Motor neuron (in vitro differentiated cells): ENCODE measurements at regions of chr18 and their contacts with region 1.

Region 1: GRCh38 chr18:8003878-8004675 is 437.0 kb downstream of the PTPRM start:
- ATAC-seq: peak in 3 of 8 experiments; percentile 34 to 62 (median 62)
- H3K4me3 ChIP-seq: no peak overlapping the region
- H3K27ac ChIP-seq: no peak overlapping the region
- H3K4me1 ChIP-seq: peaks cover 62 to 88% of the 10 kb centered on the region in 2 donors

Region 2: DNA sequence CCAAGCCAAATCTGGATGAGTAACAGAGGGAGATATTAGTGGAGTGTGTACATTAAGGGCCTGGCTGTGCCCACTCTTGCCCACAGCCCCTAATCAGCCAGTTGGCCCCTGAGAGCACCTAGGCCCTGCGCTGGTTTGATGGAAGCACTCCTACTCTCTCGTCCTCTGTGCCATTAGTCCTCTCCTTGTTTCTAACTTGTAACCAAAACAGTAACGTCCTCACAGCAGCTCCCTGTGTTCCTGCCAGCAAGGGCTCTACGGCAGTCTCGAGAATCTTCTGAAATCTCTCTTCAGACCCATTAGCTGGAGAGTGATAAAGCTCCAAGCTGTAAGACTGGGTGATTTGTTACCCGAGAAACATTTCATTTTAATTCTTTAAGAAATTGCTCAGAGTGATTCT is 697.0 kb before region 1 on chr18:
- in situ Hi-C with region 1: no loop called
- ATAC-seq: peak in 1 of 8 experiments; percentile 33
- H3K4me3 ChIP-seq: no peak overlapping the region
- H3K27ac ChIP-seq: no peak overlapping the region
- H3K4me1 ChIP-seq: peaks cover 0 to 2% of the 10 kb centered on the region in 2 donors

Region 3: GRCh38 chr18:7760967-7761948 is 242.8 kb before region 1 on chr18:
- in situ Hi-C with region 1: no loop called
- ATAC-seq: peak in 1 of 8 experiments; percentile 90
- H3K4me3 ChIP-seq: no peak overlapping the region
- H3K27ac ChIP-seq: no peak overlapping the region
- H3K4me1 ChIP-seq: peaks cover 3 to 7% of the 10 kb centered on the region in 2 donors

Region 4: DNA sequence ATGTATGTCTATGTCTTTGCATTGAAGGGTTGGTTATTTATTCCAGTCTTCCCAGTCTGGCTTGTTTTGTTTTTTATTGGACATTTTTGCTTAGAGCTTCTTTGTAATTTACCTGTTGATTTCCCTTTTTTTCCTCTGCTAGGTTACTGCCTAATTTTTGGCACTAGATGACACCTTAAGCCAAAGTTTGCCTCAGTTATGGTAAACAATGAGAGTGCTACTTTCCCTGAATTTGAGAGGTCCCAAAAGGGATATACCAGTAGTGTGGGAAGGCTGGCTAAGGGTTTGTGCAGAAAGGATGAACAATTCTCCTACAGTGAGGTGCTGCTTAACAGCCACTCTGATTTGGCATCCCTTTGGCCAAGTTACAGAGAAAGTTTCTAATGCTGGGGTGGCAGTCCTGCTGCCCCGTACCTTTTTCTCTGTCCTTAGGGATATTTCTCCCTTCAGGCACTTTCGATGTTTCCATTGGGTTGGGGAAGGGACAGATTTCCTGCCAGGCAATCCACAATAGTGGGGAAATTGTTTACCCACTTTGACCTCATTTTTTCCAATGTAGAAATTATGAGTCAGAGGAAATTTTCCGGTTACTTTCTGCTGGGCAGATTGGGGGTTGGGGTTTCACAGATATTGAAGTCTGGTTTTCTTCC is 82.0 kb before region 1 on chr18:
- in situ Hi-C with region 1: loop called in 1 of 9 experiments (anchors 25 kb)
- ATAC-seq: no peak
- H3K4me3 ChIP-seq: no peak overlapping the region
- H3K27ac ChIP-seq: no peak overlapping the region
- H3K4me1 ChIP-seq: no peaks in the 10 kb centered on the region